A673 (cell line): ENCODE measurements at regions of chr9 and their contacts with region 1.

Region 1: GRCh38 chr9:91978739-91979414 is 28.8 kb upstream of the ROR2 start:
- DNase-seq: peak; percentile 60
- H3K4me3 ChIP-seq: no peak overlapping the region
- H3K27ac ChIP-seq: no peak overlapping the region
- H3K4me1 ChIP-seq: no peaks in the 10 kb centered on the region
- H3K27me3 ChIP-seq: no peaks in the 10 kb centered on the region
- CTCF ChIP-seq: peak; percentile 55

Region 2: GRCh38 chr9:91775011-91775707 is 203.7 kb before region 1 on chr9:
- CTCF ChIA-PET with region 1: interaction called, 3 read pairs
- POLR2A ChIA-PET with region 1: no interaction called
- intact Hi-C with region 1: loop called (anchors 1 kb)
- DNase-seq: peak; percentile 77
- H3K4me3 ChIP-seq: no peak overlapping the region
- H3K27ac ChIP-seq: no peak overlapping the region
- H3K4me1 ChIP-seq: peaks cover 10% of the 10 kb centered on the region
- H3K27me3 ChIP-seq: no peaks in the 10 kb centered on the region
- CTCF ChIP-seq: peak; percentile 92

Region 3: GRCh38 chr9:92115071-92115858 is 136.4 kb after region 1 on chr9 and contains the start of gene SPTLC1:
- CTCF ChIA-PET with region 1: no interaction called
- POLR2A ChIA-PET with region 1: no interaction called
- intact Hi-C with region 1: no loop called
- DNase-seq: peak; percentile 94
- H3K4me3 ChIP-seq: peak within 1 kb of the TSS; percentile 86
- H3K27ac ChIP-seq: peak within 1 kb of the TSS; percentile 88
- H3K4me1 ChIP-seq: peaks cover 10% of the 10 kb centered on the region
- H3K27me3 ChIP-seq: no peaks in the 10 kb centered on the region
- CTCF ChIP-seq: no peak
- total RNA-seq, gene SPTLC1: 60.6 and 62.1 TPM in 2 replicates